ENCODE measurements at regions of chr17 and their contacts with region 1.

Region 1: GRCh38 chr17:12667299-12667958 is 1.7 kb downstream of the MYOCD start:
- DNase-seq: no peak
- ATAC-seq: peak; percentile 70

Region 2: DNA sequence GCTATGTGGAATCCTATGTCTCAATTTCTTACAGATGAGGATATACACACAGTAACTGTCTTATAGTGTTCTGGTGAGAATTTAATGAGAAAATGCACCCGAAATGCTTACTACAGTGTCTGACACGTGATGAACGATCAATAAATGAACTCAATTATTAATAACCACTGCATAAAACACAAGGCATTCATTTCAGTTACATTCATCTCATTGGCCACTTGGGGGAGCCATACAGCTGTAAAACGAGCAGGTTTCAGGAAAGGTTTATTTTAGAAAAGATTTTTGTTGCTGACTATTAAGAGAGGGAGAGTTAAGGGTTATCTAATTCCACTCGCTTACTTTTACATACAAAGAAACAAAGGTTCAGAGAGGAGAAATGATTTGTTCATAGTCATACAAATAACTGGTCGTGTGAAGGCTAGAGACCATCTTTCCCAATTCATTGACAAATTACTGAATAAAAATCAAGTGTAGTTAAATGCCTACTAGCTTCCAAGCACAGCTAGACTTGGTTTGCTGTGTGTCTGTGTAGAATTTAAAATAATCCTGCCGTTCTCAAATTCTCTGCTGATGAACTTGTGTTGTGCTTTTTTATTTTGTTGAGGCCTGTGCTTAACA is 486.7 kb before region 1 on chr17:
- intact Hi-C with region 1: loop called (anchors 2 kb)
- DNase-seq: no peak
- ATAC-seq: no peak

Region 3: DNA sequence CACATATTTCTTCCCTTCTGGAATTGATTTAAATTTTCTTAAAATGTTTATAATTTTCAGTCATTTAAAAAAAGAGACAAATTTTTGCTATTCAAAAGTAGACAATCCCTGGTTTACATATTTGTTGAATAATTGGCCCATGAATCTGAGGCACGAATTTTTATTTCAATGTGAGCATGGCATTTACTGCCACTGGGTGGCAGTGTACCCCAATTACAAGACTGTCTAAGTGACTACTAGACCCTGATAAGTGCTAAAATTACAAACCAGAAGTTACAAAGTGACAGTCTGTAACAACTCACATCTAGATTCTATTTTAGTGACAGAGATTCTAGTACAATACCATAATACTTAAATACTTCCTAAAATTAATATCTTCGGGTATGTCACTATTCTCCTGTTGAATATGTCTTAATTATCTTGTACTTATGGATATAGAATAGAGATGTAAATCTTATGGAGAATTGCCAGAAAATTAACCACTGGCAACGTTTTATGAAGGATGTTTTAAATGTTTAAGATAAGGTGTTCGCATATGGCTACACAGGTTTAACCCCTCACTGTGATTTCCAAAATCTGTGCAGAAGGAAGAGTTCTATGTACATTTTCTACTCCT is 410.9 kb before region 1 on chr17:
- intact Hi-C with region 1: loop called (anchors 2 kb)
- DNase-seq: no peak
- ATAC-seq: peak; percentile 65

Region 4: DNA sequence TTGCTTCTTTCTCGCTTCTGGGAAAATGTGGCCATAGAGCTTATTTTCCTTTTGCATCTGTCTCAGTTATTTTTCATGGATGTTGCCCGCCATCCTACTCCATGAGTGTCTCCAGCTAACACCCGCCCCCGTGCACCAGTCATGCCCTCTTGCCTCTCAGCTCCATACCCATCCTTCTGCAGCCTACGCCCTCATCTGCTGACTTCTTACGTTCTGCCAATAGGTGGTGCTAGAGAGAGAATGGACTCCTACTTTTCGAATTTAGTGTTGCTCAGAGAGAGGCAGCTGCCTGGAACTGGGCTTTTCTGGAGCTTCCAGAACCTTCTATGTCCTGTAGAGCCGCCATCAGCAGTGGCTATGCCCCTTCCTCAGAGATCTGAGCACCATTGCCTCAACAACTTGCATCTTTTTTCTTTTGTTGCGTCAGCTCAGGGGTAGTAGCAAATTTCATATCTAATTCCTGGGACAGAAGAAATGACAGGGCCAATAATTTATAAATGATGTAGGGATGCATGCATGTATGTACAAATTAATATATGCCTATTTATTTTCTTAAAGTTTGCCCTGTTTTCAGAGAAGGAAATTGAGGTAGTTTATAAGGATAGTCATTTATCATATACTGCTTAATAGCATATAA is 121.4 kb before region 1 on chr17:
- intact Hi-C with region 1: loop called (anchors 2 kb)
- DNase-seq: no peak
- ATAC-seq: peak; percentile 80

Region 5: GRCh38 chr17:12599186-12599920 is 68.1 kb before region 1 on chr17:
- intact Hi-C with region 1: no loop called
- DNase-seq: no peak
- ATAC-seq: no peak

Region 6: DNA sequence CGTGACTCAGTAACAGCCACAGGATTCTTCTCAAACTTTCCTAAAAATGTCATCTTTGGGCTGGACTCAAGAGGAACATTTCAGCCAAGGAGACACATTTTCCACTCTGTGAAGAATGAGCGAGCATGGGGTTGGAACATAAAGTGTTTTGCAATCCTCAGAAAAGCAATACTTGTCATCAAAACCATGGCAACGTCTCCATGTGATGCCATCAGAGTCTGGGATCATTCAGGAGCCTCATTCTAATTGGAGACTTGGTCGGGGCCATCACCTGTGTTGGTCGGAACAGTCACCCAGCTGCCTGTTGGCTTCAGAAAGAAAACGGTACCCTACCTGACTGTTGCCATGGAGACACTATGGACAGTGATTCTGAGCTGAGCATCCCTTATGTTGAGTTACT is 23.8 kb after region 1 on chr17:
- intact Hi-C with region 1: no loop called
- DNase-seq: no peak
- ATAC-seq: no peak

Region 7: GRCh38 chr17:12706070-12706469 is 38.6 kb after region 1 on chr17:
- intact Hi-C with region 1: no loop called
- DNase-seq: no peak
- ATAC-seq: no peak

Region 8: GRCh38 chr17:12730931-12731521 is 63.6 kb after region 1 on chr17:
- intact Hi-C with region 1: loop called (anchors 2 kb)
- DNase-seq: peak; percentile 84
- ATAC-seq: peak; percentile 87

Region 9: GRCh38 chr17:12744298-12744697 is 76.9 kb after region 1 on chr17:
- intact Hi-C with region 1: loop called (anchors 2 kb)
- DNase-seq: no peak
- ATAC-seq: peak; percentile 87

Region 10: DNA sequence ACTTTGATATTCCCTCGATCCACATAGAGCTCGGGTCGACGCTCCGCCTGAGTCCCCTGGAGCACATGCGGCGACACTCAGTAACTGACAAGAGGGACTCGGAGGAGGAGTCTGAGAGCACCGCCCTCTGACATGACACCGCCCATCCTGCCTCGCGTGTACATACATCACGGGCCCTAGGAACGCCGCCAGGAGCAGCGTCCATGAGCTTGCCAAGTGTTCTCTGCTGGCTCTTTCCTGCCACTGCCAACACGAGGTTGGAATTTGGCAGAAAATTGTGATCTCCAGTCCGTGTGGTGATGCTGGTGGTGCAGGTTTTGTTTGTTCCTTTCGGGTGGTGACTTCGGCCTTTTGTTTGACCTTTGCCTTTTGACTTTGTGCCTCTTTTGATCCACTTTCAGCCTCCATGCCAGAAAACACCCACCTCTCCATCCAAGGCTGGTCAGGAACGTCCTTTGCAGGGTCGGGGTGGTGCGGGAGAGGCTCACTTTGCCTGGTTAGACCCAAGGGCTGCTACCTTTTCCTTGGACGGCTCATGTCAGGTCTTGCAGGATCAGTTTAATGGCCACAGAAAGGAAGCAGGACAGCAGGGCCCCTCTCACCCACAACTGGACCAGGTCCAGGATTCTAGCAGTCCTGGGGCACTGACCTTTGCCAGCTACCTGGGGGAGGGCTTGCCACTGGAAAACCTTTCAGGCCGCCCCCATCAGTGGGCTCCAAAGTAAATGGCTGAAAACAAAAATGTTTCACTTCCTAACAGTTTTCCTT is 322.8 kb after region 1 on chr17:
- intact Hi-C with region 1: loop called (anchors 5 kb)
- DNase-seq: peak; percentile 85
- ATAC-seq: peak; percentile 82